Activated naive CD4-positive, alpha-beta T cell treated with anti-CD3 and anti-CD28 coated beads for 36 hours (primary cell): ENCODE measurements at regions of chr19 and their contacts with region 1.

Region 1: DNA sequence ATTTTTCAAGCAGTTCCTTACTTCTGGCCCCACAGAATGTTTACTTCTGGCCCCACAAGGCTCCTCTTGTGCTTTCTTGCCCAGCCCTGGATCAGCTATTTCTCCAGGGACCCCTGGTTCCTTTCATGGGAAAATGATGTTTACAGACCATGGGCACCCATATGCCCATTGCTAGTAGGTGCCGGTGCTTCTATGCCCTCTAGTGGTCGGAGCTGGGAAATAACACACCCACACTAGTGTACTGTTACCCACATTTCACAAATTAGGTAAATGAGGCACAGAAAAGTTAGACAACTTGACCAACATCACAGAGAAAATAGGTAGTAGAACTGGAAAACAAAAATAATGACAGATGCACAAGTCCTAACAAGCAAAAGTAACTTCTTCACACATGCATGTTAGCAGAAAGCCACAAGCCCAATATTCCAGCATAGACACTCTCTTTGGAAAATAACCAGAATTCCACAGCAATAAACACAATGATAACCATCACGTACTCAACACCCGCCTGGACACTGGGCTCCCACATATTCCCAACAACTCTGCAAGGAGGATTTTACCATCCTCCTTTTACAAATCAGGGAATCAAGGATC is 1.3 kb upstream of the CEACAM6 start:
- DNase-seq: peak; percentile 85
- H3K4me3 Mint-ChIP-seq: no peak overlapping the region
- H3K27ac Mint-ChIP-seq: no peak overlapping the region
- H3K4me1 Mint-ChIP-seq: peaks cover 6% of the 10 kb centered on the region
- H3K27me3 Mint-ChIP-seq: peaks cover 22% of the 10 kb centered on the region

Region 2: GRCh38 chr19:41706741-41707501 is 47.1 kb before region 1 on chr19:
- CTCF ChIA-PET with region 1: interaction called, 32 read pairs
- intact Hi-C with region 1: no loop called
- DNase-seq: peak; percentile 75
- H3K4me3 Mint-ChIP-seq: peak overlapping the region; percentile 62
- H3K27ac Mint-ChIP-seq: no peak overlapping the region
- H3K4me1 Mint-ChIP-seq: peaks cover 2% of the 10 kb centered on the region
- H3K27me3 Mint-ChIP-seq: peaks cover 25% of the 10 kb centered on the region

Region 3: GRCh38 chr19:41740415-41741243 is 13.4 kb before region 1 on chr19:
- CTCF ChIA-PET with region 1: interaction called, 23 read pairs
- intact Hi-C with region 1: no loop called
- DNase-seq: no peak
- H3K4me3 Mint-ChIP-seq: no peak overlapping the region
- H3K27ac Mint-ChIP-seq: no peak overlapping the region
- H3K4me1 Mint-ChIP-seq: peaks cover 20% of the 10 kb centered on the region
- H3K27me3 Mint-ChIP-seq: peaks cover 19% of the 10 kb centered on the region

Region 4: GRCh38 chr19:41785653-41786052 is 31.6 kb after region 1 on chr19:
- CTCF ChIA-PET with region 1: interaction called, 122 read pairs
- intact Hi-C with region 1: loop called (anchors 1 kb)
- DNase-seq: peak; percentile 86
- H3K4me3 Mint-ChIP-seq: no peak overlapping the region
- H3K27ac Mint-ChIP-seq: no peak overlapping the region
- H3K4me1 Mint-ChIP-seq: peaks cover 17% of the 10 kb centered on the region
- H3K27me3 Mint-ChIP-seq: peaks cover 40% of the 10 kb centered on the region

Region 5: GRCh38 chr19:41821003-41821735 is 67.1 kb after region 1 on chr19:
- CTCF ChIA-PET with region 1: interaction called, 10 read pairs
- intact Hi-C with region 1: loop called (anchors 2 kb)
- DNase-seq: peak; percentile 72
- H3K4me3 Mint-ChIP-seq: no peak overlapping the region
- H3K27ac Mint-ChIP-seq: no peak overlapping the region
- H3K4me1 Mint-ChIP-seq: no peaks in the 10 kb centered on the region
- H3K27me3 Mint-ChIP-seq: peaks cover 5% of the 10 kb centered on the region